Heart left ventricle (tissue), 16 donors: ENCODE measurements at regions of chr3 and their contacts with region 1.

Region 1: DNA sequence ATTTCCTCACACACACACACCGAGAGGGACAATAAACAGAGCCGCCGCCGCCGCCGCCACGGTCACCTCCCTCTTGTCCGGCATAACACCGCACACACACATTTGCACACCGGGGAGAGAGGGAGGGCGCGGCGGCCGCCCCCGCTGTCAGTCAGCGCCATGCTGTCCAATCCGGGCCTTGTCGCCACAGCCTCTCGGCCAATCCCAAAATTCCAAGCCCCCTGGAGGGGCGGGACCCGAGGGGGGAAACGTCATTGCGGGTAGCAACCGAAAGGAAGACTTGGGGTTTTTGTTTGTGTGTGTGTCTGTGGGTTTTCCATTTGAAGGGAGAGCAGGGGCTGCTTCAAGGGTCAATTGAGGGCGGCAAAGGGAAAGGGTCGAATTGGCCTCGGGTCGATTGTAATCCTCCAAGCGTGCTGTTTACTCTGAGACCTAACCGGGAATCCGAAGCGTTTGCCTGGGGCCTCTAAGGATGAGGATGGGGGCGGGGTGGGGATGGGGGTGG is at the start of gene TOP2B:
- DNase-seq: peak; percentile 96 to 97 (median 97)
- ATAC-seq: peak; percentile 99 to 100 (median 100)
- H3K4me3 ChIP-seq: peak within 1 kb of the TSS; percentile 54 to 97 (median 78)
- H3K27ac ChIP-seq: peak within 1 kb of the TSS; percentile 94 to 99 (median 96)
- H3K4me1 ChIP-seq: peaks cover 9 to 43% (median 35%) of the 10 kb centered on the region in 12 donors
- H3K27me3 ChIP-seq: no peaks in the 10 kb centered on the region
- CTCF ChIP-seq: no peak
- POLR2A ChIP-seq: peak; percentile 81 to 98
- total RNA-seq, gene TOP2B: 65.1 to 124 (median 98.4) TPM

Region 2: DNA sequence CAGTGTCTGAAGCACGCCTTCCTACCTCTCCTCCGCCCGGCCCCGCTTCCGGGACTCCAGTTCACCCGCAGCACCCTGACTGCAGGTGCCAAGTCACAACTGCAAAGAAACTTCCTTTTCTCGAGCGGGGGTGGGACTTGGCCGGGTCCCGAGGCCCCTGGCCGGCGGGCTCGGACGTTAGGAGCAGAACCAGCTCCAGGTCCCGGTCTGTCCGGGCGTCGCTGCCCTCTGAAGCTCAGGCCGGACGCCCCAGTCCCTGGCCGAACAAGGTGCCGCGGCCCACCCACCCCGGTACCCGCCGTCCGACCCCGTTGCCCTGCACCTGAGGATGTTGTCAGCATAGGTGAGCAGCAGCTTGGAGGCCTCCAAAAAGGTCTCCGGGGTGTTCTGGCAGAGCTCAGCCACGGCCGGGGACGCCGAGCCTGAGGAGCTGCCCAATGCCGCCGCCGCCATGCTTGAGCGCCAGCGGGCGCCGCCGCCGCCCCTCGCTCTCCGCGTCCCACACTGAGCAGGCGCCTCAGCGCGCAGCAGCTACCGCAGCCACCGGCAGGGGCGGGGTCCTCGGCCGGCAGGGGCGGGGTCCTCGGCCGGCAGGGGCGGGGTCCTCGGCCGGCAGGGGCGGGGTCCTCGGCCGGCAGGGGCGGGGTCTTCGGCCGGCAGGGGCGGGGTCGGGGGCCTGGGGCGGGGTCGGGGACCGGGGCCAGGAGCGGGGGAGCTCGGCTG is 118.2 kb after region 1 on chr3 and contains the start of gene NGLY1:
- intact Hi-C with region 1: loop called in 7 of 10 experiments (anchors 2 to 5 kb)
- DNase-seq: peak; percentile 86 to 93 (median 90)
- ATAC-seq: peak; percentile 92 to 98 (median 98)
- H3K4me3 ChIP-seq: peak within 1 kb of the TSS; percentile 74 to 97 (median 88)
- H3K27ac ChIP-seq: peak within 1 kb of the TSS; percentile 63 to 94 (median 90)
- H3K4me1 ChIP-seq: peaks cover 0 to 37% (median 13%) of the 10 kb centered on the region in 12 donors
- H3K27me3 ChIP-seq: no peaks in the 10 kb centered on the region
- CTCF ChIP-seq: peak in 6 of 12 donors; percentile 18 to 43 (median 30)
- POLR2A ChIP-seq: peak in 1 of 2 donors; percentile 96
- total RNA-seq, gene NGLY1: 18.5 to 41.0 (median 31.0) TPM

Region 3: GRCh38 chr3:25789596-25790556 is 125.0 kb after region 1 on chr3 and contains the start of gene OXSM:
- intact Hi-C with region 1: loop called in 6 of 10 experiments (anchors 2 to 5 kb)
- DNase-seq: peak; percentile 90 to 97 (median 94)
- ATAC-seq: peak; percentile 99
- H3K4me3 ChIP-seq: peak within 1 kb of the TSS; percentile 46 to 91 (median 72)
- H3K27ac ChIP-seq: peak within 1 kb of the TSS; percentile 49 to 94 (median 89)
- H3K4me1 ChIP-seq: peaks cover 0 to 32% (median 13%) of the 10 kb centered on the region in 12 donors
- H3K27me3 ChIP-seq: no peaks in the 10 kb centered on the region
- CTCF ChIP-seq: no peak
- POLR2A ChIP-seq: peak in 1 of 2 donors; percentile 95
- total RNA-seq, gene OXSM: 7.3 to 18.5 (median 13.7) TPM